Vagina (tissue), 2 donors: ENCODE measurements at regions of chr22 and their contacts with region 1.

Region 1: GRCh38 chr22:32457031-32457430 is 7.2 kb downstream of the BPIFC start:
- DNase-seq: peak in 1 of 2 donors; percentile 20
- H3K4me3 ChIP-seq: no peak overlapping the region
- H3K27ac ChIP-seq: no peak overlapping the region
- H3K4me1 ChIP-seq: no peaks in the 10 kb centered on the region
- H3K27me3 ChIP-seq: peaks cover 5% of the 10 kb centered on the region
- CTCF ChIP-seq: no peak
- POLR2A ChIP-seq: no peak

Region 2: GRCh38 chr22:30523776-30524489 is 1933.1 kb before region 1 on chr22:
- intact Hi-C with region 1: loop called (anchors 5 kb)
- DNase-seq: no peak
- H3K4me3 ChIP-seq: no peak overlapping the region
- H3K27ac ChIP-seq: no peak overlapping the region
- H3K4me1 ChIP-seq: no peaks in the 10 kb centered on the region
- H3K27me3 ChIP-seq: no peaks in the 10 kb centered on the region
- CTCF ChIP-seq: no peak
- POLR2A ChIP-seq: no peak